Natural killer cell (primary cell): ENCODE measurements at regions of chr9 and their contacts with region 1.

Region 1: DNA sequence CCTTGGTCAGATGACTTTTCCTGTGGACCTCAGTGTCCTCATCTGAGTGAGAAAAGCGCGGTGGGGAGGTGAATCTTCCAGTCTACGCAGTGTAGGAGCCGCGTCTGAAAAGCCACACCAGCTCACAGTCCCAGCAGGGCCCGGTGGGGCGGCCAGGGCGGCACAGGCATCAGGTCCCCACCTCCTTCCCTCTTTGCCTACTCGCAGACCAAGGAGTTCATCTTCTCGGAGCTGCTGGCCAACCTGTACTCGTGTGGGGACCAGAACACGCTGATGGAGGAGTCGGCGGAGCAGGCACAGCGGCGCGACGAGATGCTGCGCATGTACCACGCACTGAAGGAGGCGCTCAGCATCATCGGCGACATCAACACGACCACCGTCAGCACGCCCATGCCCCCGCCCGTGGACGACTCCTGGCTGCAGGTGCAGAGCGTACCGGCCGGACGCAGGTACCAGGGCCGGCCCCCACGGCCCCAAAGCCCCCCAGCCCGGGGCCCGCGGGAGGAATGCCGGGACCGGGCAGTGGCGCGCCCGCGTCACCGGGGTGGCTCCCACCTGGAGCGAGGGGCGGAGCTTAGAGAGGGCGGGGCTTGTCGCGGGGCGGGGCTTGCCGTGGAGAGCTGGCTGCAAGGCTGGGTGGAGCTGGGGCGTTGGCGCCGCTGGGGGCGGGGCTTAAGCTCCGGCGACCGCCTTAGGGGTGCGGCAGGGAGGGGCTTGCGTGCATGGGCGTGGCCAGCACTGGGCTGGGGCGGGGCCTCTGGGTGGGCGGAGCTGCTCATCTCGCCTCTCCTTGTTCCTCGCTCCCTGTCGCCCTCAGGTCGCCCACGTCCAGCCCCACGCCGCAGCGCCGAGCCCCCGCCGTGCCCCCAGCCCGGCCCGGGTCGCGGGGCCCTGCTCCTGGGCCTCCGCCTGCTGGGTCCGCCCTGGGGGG is 25.6 kb downstream of the GOLGA2 start:
- DNase-seq: peak; percentile 92 to 97
- ATAC-seq: peak; percentile 95 to 99 (median 95)
- H3K4me3 ChIP-seq: peak overlapping the region; percentile 39
- H3K4me3 Mint-ChIP-seq: peak overlapping the region; percentile 80
- H3K27ac ChIP-seq: peak overlapping the region; percentile 56
- H3K27ac Mint-ChIP-seq: peak overlapping the region; percentile 54 to 79
- H3K4me1 ChIP-seq: peaks cover 35% of the 10 kb centered on the region
- H3K4me1 Mint-ChIP-seq: peaks cover 16 to 32% of the 10 kb centered on the region in 2 donors
- H3K27me3 ChIP-seq: no peaks in the 10 kb centered on the region
- H3K27me3 Mint-ChIP-seq: peaks cover 0 to 10% of the 10 kb centered on the region in 2 donors
- CTCF ChIP-seq: no peak

Region 2: GRCh38 chr9:128218518-128219389 is 31.4 kb before region 1 on chr9:
- intact Hi-C with region 1: loop called (anchors 1 kb)
- DNase-seq: peak; percentile 84 to 94
- ATAC-seq: peak; percentile 94 to 97 (median 96)
- H3K4me3 ChIP-seq: peak overlapping the region; percentile 29
- H3K4me3 Mint-ChIP-seq: peak overlapping the region; percentile 84
- H3K27ac ChIP-seq: no peak overlapping the region
- H3K27ac Mint-ChIP-seq: peak overlapping the region; percentile 64 to 69
- H3K4me1 ChIP-seq: peaks cover 17% of the 10 kb centered on the region
- H3K4me1 Mint-ChIP-seq: peaks cover 11 to 12% of the 10 kb centered on the region in 2 donors
- H3K27me3 ChIP-seq: no peaks in the 10 kb centered on the region
- H3K27me3 Mint-ChIP-seq: peaks cover 0 to 4% of the 10 kb centered on the region in 2 donors
- CTCF ChIP-seq: no peak

Region 3: DNA sequence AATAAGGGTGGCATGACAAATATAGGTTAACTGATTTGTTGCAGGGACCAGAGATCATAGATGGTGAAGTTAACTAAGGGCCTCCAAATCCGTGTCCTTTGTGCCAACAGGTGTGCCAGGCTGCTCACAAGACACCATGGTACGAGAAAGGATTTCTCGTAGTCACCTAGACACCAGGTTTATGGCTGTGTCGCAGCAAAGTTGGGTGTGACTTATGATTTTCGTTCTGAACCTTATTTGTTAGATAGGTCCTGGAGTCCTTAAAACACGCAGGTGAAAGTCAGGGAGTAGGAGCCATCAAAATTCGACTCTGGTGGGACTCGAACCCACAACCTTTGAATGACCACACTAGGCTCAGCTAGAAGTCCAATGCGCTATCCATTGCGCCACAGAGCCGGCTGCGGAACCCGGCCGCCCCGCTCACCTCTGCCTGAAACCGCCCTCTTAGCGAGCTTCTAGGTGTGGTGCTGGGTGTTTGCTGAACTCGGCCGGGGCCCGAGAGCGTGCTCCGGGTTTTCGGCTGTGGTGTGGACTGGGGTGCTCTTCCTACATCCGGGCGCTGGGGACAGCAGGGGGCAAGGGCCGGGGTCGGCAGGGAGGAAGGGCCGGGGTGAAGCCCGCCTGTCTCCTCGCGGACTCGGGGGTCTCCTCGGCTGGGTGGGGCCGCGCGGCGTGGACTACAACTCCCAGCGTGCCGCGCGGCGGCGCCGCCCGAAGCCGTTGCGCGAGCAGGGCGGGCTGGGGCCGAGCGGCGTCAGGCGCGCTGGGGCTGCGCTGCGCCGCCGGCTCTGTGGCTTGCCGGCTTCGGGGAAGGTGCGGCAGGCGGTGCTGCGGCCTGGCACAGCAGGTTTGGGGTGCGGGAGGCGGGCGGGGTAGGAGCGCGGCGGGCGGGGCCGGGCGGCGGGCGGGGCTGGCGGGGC is 89.9 kb after region 1 on chr9 and contains the start of gene SLC27A4:
- intact Hi-C with region 1: loop called (anchors 1 kb)
- DNase-seq: peak; percentile 64 to 92
- ATAC-seq: peak; percentile 90 to 95 (median 93)
- H3K4me3 ChIP-seq: peak within 1 kb of the TSS; percentile 61
- H3K4me3 Mint-ChIP-seq: peak within 1 kb of the TSS; percentile 83
- H3K27ac ChIP-seq: peak within 1 kb of the TSS; percentile 49
- H3K27ac Mint-ChIP-seq: peak within 1 kb of the TSS; percentile 37 to 75
- H3K4me1 ChIP-seq: peaks cover 15% of the 10 kb centered on the region
- H3K4me1 Mint-ChIP-seq: peaks cover 7% of the 10 kb centered on the region in 2 donors
- H3K27me3 ChIP-seq: no peaks in the 10 kb centered on the region
- H3K27me3 Mint-ChIP-seq: no peaks in the 10 kb centered on the region
- CTCF ChIP-seq: no peak
- total RNA-seq, gene SLC27A4: 7.7 to 12.3 (median 11.2) TPM